ENCODE measurements at regions of chr1 and their contacts with region 1.

Region 1: GRCh38 chr1:243354511-243355153 is 98.8 kb downstream of the SDCCAG8 start:
- DNase-seq: no peak
- ATAC-seq: peak in 5 of 8 donors; percentile 47 to 76 (median 62)
- H3K4me3 ChIP-seq: peak overlapping the region in 8 of 10 donors; percentile 17 to 46 (median 36)
- H3K27ac ChIP-seq: peak overlapping the region in 5 of 10 donors; percentile 7 to 59 (median 41)
- H3K4me1 ChIP-seq: peaks cover 0 to 16% (median 5%) of the 10 kb centered on the region in 9 donors
- H3K27me3 ChIP-seq: no peaks in the 10 kb centered on the region
- CTCF ChIP-seq: no peak

Region 2: GRCh38 chr1:243301059-243301458 is 53.6 kb before region 1 on chr1:
- intact Hi-C with region 1: no loop called
- DNase-seq: no peak
- ATAC-seq: no peak
- H3K4me3 ChIP-seq: no peak overlapping the region
- H3K27ac ChIP-seq: no peak overlapping the region
- H3K4me1 ChIP-seq: no peaks in the 10 kb centered on the region
- H3K27me3 ChIP-seq: no peaks in the 10 kb centered on the region
- CTCF ChIP-seq: no peak

Region 3: GRCh38 chr1:243864913-243865312 is 510.3 kb after region 1 on chr1:
- intact Hi-C with region 1: loop called in 1 of 10 experiments (anchors 5 kb)
- DNase-seq: no peak
- ATAC-seq: no peak
- H3K4me3 ChIP-seq: no peak overlapping the region
- H3K27ac ChIP-seq: no peak overlapping the region
- H3K4me1 ChIP-seq: no peaks in the 10 kb centered on the region
- H3K27me3 ChIP-seq: peaks cover 0 to 9% (median under 1%) of the 10 kb centered on the region in 7 donors
- CTCF ChIP-seq: no peak